ENCODE measurements at regions of chr20 and their contacts with region 1.

Region 1: DNA sequence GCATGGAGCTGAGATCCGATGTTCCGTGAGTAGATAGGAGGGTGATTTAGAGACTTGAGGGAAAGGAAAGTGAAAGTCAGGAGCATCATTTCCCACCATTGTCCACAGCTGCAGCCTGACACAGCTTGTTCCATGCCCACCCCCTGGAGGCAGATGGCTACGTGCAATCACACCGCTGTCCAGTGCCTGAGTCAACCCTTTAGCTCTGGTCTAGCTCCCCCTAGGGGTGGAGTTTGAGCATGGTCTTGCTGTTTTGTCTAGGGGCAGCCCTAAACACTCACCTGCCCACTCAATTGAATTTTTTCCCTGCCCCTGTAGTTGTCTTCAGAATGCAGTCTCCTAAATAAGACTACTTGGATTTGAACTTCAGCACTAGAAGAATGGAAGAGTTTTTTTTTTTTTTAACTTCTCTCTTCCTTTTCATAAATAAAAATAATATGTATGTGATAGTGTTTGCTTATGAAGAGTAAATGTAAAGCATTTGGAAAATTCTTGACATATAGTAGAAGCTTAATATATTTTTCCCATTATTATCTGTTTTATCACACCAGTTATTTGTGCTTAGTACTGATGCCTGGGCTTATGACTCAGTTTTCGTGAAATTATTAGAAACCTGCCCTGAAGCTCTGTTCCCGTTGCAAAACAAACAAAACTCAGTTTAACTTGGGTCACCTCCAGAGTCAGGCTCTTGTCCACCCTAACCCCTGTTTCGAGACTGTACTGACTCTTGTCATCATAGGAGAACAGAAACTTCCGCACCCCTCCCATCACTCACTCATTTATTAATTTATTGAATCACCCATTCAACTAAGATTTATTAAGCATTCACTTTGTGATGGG is 814.8 kb downstream of the MAFB start:
- DNase-seq: peak; percentile 65
- CTCF ChIP-seq: peak; percentile 82

Region 2: DNA sequence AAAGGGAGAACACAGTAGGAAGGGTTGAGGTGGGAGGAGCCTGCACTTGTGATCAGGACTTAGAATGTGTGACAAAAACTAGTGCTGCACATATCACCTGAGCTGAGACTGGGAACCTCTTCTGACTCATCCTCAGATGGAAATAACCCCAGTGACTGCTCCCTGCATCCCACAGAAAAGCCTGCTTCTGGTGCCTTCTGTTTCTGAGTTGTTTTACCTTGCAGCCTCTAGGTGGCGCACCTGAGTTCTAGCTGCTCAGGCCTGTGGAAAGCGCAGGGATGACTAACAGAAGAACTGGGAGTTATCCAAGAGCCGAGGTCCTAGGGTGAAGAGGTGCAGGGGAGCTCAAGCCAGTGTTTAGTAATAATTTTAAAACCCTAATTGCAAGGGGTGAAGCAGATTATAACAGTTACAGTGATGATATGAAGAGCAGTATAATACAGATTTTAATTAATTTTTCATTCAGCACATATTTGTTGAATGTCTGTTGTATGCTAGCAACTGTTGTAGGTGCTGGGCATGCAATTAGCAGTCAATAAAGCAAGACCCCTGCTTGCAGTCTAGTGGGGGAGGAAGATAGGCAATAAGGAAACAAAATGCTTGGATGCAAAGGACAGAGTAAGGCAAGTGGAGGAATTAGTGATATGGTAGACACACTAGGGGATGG is 609.6 kb before region 1 on chr20:
- CTCF ChIA-PET with region 1: interaction called, 72 read pairs
- POLR2A ChIA-PET with region 1: no interaction called
- DNase-seq: peak; percentile 56
- CTCF ChIP-seq: peak; percentile 88

Region 3: GRCh38 chr20:39289316-39289715 is 585.0 kb before region 1 on chr20:
- CTCF ChIA-PET with region 1: interaction called, 15 read pairs
- POLR2A ChIA-PET with region 1: no interaction called
- DNase-seq: peak; percentile 20
- CTCF ChIP-seq: peak; percentile 52

Region 4: GRCh38 chr20:39829256-39829655 is 45.0 kb before region 1 on chr20:
- CTCF ChIA-PET with region 1: interaction called, 24 read pairs
- POLR2A ChIA-PET with region 1: no interaction called
- DNase-seq: no peak
- CTCF ChIP-seq: peak; percentile 24

Region 5: GRCh38 chr20:39861381-39861780 is 12.9 kb before region 1 on chr20:
- CTCF ChIA-PET with region 1: interaction called, 31 read pairs
- POLR2A ChIA-PET with region 1: no interaction called
- DNase-seq: no peak
- CTCF ChIP-seq: no peak

Region 6: DNA sequence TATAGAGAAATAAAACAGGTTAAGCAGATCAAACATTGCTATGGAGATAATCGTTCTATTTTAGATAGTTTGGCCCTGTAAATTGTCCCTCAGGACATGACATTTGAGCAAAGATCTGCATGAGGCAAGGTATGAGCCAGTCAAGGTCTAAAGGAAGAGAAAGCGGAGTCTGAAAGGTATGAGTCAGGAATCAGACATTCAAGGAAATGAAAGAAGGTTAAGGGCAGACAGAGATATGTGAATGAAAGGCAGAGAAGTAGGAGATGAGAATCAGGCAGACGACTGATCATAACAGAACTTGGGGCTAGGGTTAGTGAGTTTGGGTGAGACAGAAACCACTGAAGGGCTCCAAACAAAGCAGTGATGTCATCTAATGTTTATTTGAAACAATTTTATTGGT is 39.0 kb after region 1 on chr20:
- CTCF ChIA-PET with region 1: no interaction called
- POLR2A ChIA-PET with region 1: no interaction called
- DNase-seq: no peak
- CTCF ChIP-seq: no peak

Region 7: GRCh38 chr20:39986173-39986904 is 112.1 kb after region 1 on chr20:
- CTCF ChIA-PET with region 1: no interaction called
- POLR2A ChIA-PET with region 1: no interaction called
- DNase-seq: no peak
- CTCF ChIP-seq: no peak

Region 8: GRCh38 chr20:40090236-40090635 is 216.0 kb after region 1 on chr20:
- CTCF ChIA-PET with region 1: no interaction called
- POLR2A ChIA-PET with region 1: no interaction called
- DNase-seq: no peak
- CTCF ChIP-seq: no peak